Gastrocnemius medialis (tissue), 4 donors: ENCODE measurements at regions of chr5 and their contacts with region 1.

Region 1: DNA sequence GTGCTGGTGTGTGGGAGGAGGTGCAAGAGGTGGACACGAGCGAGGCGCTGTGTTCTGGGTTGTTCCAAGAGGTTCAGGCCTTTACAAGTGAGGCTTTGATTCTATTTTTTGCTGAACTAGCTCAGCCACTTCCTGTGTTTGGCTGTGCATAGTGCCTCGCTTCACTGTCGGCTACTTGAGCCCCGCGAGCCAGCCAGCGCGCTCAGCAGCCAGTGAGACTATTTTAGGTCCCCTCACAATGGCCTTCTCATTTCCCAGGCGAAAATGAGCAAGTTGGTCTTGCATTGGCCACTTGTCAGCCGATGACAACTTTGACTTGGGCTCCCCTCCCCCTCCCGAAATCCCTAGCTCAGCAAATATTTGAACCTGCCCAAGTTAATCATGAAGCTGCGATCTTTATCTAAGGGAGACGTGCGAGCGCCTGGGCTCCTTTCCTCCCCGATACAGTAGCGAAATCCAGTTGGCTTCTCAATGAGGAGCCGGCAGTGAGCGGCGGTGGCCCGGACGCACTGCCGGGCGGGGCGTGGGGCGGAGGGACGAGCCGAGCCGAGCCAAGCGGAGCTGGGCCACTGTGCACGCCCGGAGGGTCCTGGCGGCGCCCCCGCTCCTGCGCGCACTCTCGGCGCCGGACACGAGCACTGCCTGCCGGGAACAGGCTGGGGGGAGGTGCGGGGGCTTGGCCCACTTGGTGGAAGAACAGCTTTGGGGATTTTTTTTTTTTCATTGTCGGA is 72.6 kb downstream of the PIK3R1 start:
- DNase-seq: peak; percentile 71 to 85
- ATAC-seq: peak; percentile 81 to 85
- H3K4me3 ChIP-seq: peak overlapping the region; percentile 59 to 65 (median 64)
- H3K27ac ChIP-seq: peak overlapping the region; percentile 88 to 91 (median 90)
- H3K4me1 ChIP-seq: peaks cover 69 to 70% of the 10 kb centered on the region in 2 donors
- H3K27me3 ChIP-seq: no peaks in the 10 kb centered on the region
- CTCF ChIP-seq: no peak
- POLR2A ChIP-seq: peak; percentile 8 to 43

Region 2: DNA sequence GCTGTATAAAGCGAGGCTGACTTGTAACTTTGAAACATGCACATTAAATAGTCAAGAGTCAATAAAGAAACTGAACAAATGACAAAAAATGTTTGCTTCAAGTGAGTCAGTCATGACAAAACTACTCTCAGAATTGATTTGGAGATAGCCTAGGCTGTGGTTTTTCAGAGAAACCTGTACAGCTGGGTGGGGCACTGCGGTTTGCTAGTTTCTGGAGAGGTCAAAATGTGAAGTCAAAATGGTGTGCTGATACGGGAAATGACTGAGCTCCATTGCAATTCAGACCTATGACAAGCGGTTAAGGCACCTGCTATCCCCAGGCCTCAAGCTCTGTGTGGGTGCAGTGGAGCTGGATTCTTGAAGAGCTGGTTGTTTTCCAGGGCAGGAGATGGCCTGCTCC is 1081.2 kb before region 1 on chr5:
- in situ Hi-C with region 1: no loop called
- intact Hi-C with region 1: no loop called
- DNase-seq: no peak
- ATAC-seq: no peak
- H3K4me3 ChIP-seq: no peak overlapping the region
- H3K27ac ChIP-seq: no peak overlapping the region
- H3K4me1 ChIP-seq: no peaks in the 10 kb centered on the region
- H3K27me3 ChIP-seq: no peaks in the 10 kb centered on the region
- CTCF ChIP-seq: no peak
- POLR2A ChIP-seq: no peak

Region 3: GRCh38 chr5:68149189-68149588 is 139.0 kb before region 1 on chr5:
- in situ Hi-C with region 1: no loop called
- intact Hi-C with region 1: no loop called
- DNase-seq: no peak
- ATAC-seq: no peak
- H3K4me3 ChIP-seq: no peak overlapping the region
- H3K27ac ChIP-seq: no peak overlapping the region
- H3K4me1 ChIP-seq: no peaks in the 10 kb centered on the region
- H3K27me3 ChIP-seq: no peaks in the 10 kb centered on the region
- CTCF ChIP-seq: no peak
- POLR2A ChIP-seq: no peak

Region 4: DNA sequence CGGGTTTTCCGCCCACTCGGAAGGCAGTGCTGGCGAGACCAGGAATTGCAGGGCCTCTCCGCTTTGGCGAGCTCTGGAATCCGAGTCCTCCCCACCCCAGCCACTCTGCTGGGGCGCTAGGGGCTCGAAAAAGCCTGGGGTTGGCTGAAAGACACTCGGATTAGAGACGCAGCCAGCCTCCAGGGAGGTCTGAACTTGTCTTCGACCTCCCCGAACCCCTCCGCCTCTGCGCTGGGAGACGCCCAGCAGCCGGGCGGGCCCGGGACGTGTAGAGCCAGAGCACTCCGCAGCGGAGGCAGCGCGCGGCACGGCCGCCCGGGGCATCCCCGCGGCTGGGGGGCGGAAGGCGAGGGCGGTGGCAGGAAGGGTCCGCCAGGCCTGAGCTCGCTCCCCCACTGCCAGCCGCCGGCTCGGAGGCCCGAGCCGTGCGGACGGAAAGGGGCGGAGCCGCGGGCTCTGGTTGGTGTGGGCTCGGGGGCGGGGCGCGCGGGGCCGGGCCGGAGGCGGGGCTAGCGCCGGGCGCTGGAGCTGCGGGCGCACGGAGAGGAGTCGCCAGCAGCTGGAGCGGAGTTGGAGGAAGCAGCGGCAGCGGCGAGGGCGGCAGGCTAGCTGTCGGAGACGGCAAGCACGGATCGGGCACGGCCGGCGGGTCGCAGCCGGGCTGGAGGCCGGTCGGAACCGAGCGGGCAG is 72.8 kb before region 1 on chr5 and contains the start of gene PIK3R1:
- in situ Hi-C with region 1: no loop called
- intact Hi-C with region 1: loop called (anchors 2 kb)
- DNase-seq: peak; percentile 92 to 95
- ATAC-seq: peak; percentile 81 to 84
- H3K4me3 ChIP-seq: peak within 1 kb of the TSS; percentile 85 to 100 (median 92)
- H3K27ac ChIP-seq: peak within 1 kb of the TSS; percentile 94 to 98 (median 96)
- H3K4me1 ChIP-seq: peaks cover 21 to 28% of the 10 kb centered on the region in 2 donors
- H3K27me3 ChIP-seq: no peaks in the 10 kb centered on the region
- CTCF ChIP-seq: peak; percentile 55 to 67 (median 55)
- POLR2A ChIP-seq: peak; percentile 98 to 99
- total RNA-seq, gene PIK3R1: 87.2 to 129 (median 100) TPM

Region 5: DNA sequence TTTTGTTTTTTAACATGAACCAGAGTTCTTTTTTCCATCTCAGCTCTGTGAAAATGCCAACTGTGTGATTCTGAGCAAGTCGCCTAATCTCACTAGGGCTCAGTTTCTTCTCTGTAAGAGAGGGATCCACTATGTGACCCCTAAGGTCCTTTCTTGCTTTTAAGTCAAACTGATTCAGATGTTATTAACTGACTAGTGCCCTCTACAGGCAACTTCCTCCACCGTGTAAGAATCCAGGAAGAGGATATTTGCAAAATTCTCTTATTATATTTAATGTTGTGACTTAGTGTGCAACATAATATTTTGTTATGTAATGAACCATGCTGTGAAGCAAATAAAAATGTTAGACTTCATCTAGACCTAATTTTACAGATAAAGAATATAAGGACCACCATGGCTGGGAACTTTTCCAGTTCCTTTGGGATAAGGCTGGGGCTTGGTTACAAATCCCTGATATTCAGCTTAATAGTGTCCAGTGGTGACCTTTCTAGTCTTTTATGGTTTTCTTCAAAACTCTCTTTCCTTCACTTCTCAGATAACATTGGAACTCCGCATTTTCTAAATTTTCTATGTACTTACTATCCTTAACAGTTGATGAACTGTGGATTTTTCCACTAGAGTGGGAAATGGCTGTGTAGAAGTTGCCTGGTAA is 172.1 kb after region 1 on chr5:
- in situ Hi-C with region 1: loop called (anchors 5 kb)
- intact Hi-C with region 1: loop called (anchors 1 kb)
- DNase-seq: no peak
- ATAC-seq: peak in 1 of 2 donors; percentile 63
- H3K4me3 ChIP-seq: no peak overlapping the region
- H3K27ac ChIP-seq: no peak overlapping the region
- H3K4me1 ChIP-seq: peaks cover 0 to 16% of the 10 kb centered on the region in 2 donors
- H3K27me3 ChIP-seq: no peaks in the 10 kb centered on the region
- CTCF ChIP-seq: peak; percentile 52 to 71 (median 62)
- POLR2A ChIP-seq: no peak

Region 6: DNA sequence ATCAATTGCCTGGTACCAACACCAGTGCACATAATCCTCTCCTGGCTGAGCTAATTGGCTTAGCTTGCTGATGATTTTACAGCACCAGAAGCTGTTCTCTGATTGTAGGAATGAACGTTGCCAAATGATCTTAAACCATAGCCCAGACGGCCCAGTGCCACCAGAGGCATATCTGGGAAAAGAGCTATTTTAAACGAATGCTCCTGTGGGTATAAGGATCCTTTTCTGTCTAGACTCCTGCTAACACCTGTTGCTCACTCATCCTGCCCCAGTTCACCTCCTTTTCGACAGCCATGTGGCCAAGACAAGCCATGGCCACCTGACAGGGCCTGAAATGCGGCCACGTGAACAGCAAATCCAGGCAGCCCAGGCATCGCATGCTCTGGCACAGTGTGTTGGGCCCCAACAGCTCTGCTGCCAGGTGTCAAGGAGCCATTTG is 515.8 kb after region 1 on chr5:
- in situ Hi-C with region 1: no loop called
- intact Hi-C with region 1: loop called (anchors 5 kb)
- DNase-seq: peak; percentile 69 to 80
- ATAC-seq: peak; percentile 88 to 90
- H3K4me3 ChIP-seq: no peak overlapping the region
- H3K27ac ChIP-seq: peak overlapping the region; percentile 67 to 83 (median 74)
- H3K4me1 ChIP-seq: peaks cover 38 to 40% of the 10 kb centered on the region in 2 donors
- H3K27me3 ChIP-seq: no peaks in the 10 kb centered on the region
- CTCF ChIP-seq: no peak
- POLR2A ChIP-seq: no peak

Region 7: GRCh38 chr5:68962757-68963484 is 674.8 kb after region 1 on chr5:
- in situ Hi-C with region 1: loop called (anchors 5 to 25 kb)
- intact Hi-C with region 1: loop called (anchors 1 kb)
- DNase-seq: peak; percentile 43 to 54
- ATAC-seq: peak; percentile 94 to 95
- H3K4me3 ChIP-seq: no peak overlapping the region
- H3K27ac ChIP-seq: peak overlapping the region in 3 of 4 donors; percentile 2 to 37 (median 6)
- H3K4me1 ChIP-seq: peaks cover 0 to 8% of the 10 kb centered on the region in 2 donors
- H3K27me3 ChIP-seq: no peaks in the 10 kb centered on the region
- CTCF ChIP-seq: peak; percentile 65 to 85 (median 77)
- POLR2A ChIP-seq: no peak